ENCODE measurements at regions of chrX and their contacts with region 1.

Region 1: GRCh38 chrX:78333521-78333920 is 6.1 kb upstream of the CYSLTR1 start:
- DNase-seq: no peak
- H3K4me3 Mint-ChIP-seq: no peak overlapping the region
- H3K27ac Mint-ChIP-seq: peak overlapping the region; percentile 16
- H3K4me1 Mint-ChIP-seq: peaks cover 62% of the 10 kb centered on the region
- H3K27me3 Mint-ChIP-seq: no peaks in the 10 kb centered on the region

Region 2: GRCh38 chrX:78182881-78183280 is 150.6 kb before region 1 on chrX:
- CTCF ChIA-PET with region 1: no interaction called
- POLR2A ChIA-PET with region 1: no interaction called
- intact Hi-C with region 1: no loop called
- DNase-seq: no peak
- H3K4me3 Mint-ChIP-seq: no peak overlapping the region
- H3K27ac Mint-ChIP-seq: no peak overlapping the region
- H3K4me1 Mint-ChIP-seq: no peaks in the 10 kb centered on the region
- H3K27me3 Mint-ChIP-seq: no peaks in the 10 kb centered on the region

Region 3: GRCh38 chrX:78314571-78314970 is 18.9 kb before region 1 on chrX:
- CTCF ChIA-PET with region 1: no interaction called
- POLR2A ChIA-PET with region 1: no interaction called
- intact Hi-C with region 1: loop called (anchors 1 kb)
- DNase-seq: peak; percentile 47
- H3K4me3 Mint-ChIP-seq: no peak overlapping the region
- H3K27ac Mint-ChIP-seq: no peak overlapping the region
- H3K4me1 Mint-ChIP-seq: peaks cover 53% of the 10 kb centered on the region
- H3K27me3 Mint-ChIP-seq: no peaks in the 10 kb centered on the region

Region 4: GRCh38 chrX:78375894-78376293 is 42.4 kb after region 1 on chrX:
- CTCF ChIA-PET with region 1: no interaction called
- POLR2A ChIA-PET with region 1: no interaction called
- intact Hi-C with region 1: loop called (anchors 1 kb)
- DNase-seq: no peak
- H3K4me3 Mint-ChIP-seq: no peak overlapping the region
- H3K27ac Mint-ChIP-seq: peak overlapping the region; percentile 23
- H3K4me1 Mint-ChIP-seq: peaks cover 21% of the 10 kb centered on the region
- H3K27me3 Mint-ChIP-seq: no peaks in the 10 kb centered on the region

Region 5: GRCh38 chrX:78693536-78693935 is 360.0 kb after region 1 on chrX:
- CTCF ChIA-PET with region 1: no interaction called
- POLR2A ChIA-PET with region 1: no interaction called
- intact Hi-C with region 1: no loop called
- DNase-seq: no peak
- H3K4me3 Mint-ChIP-seq: no peak overlapping the region
- H3K27ac Mint-ChIP-seq: no peak overlapping the region
- H3K4me1 Mint-ChIP-seq: no peaks in the 10 kb centered on the region
- H3K27me3 Mint-ChIP-seq: no peaks in the 10 kb centered on the region